HEK293T (cell line): ENCODE measurements at regions of chr3 and their contacts with region 1.

Region 1: GRCh38 chr3:138915503-138916498 is 31.1 kb downstream of the FOXL2 start:
- DNase-seq: peak; percentile 89

Region 2: GRCh38 chr3:138594150-138594934 is 321.5 kb before region 1 on chr3 and contains the start of gene CEP70:
- CTCF ChIA-PET with region 1: interaction called, 40 read pairs
- POLR2A ChIA-PET with region 1: interaction called, 17 read pairs
- DNase-seq: peak; percentile 92

Region 3: DNA sequence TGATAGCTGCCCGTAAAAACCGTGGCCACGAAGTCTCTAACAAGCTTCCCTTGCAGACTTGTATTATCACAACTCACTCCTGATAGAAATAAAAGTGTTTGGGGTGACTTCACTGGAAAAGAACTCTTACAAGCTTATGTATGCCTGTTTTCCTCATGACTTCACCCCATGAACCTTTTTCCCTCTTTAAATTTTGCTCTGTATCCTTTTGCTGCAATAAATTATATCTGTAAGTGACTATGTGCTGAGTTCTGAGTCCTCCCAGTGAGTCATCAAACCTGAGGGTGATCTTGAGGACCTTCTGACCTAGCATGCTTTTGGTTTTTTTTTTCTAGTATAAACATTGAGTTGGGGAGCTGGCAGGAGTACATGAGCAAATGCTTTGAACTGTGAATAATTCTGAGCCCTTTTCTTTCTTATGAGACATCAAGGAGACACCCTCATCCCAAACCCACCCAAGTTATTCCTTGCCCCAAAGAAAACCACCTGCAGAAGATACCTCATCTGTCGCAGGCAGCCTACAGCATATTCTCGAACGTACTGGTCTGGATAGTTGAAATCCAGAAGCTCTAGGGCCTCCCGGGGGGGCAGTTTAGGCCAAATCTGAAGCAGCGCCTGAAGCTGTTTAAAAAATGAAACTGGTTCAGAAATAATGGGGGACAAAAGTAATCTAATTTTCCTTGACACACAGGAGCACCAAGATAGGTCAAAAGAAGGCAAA is 221.4 kb before region 1 on chr3:
- CTCF ChIA-PET with region 1: interaction called, 58 read pairs
- POLR2A ChIA-PET with region 1: interaction called, 13 read pairs
- DNase-seq: no peak

Region 4: DNA sequence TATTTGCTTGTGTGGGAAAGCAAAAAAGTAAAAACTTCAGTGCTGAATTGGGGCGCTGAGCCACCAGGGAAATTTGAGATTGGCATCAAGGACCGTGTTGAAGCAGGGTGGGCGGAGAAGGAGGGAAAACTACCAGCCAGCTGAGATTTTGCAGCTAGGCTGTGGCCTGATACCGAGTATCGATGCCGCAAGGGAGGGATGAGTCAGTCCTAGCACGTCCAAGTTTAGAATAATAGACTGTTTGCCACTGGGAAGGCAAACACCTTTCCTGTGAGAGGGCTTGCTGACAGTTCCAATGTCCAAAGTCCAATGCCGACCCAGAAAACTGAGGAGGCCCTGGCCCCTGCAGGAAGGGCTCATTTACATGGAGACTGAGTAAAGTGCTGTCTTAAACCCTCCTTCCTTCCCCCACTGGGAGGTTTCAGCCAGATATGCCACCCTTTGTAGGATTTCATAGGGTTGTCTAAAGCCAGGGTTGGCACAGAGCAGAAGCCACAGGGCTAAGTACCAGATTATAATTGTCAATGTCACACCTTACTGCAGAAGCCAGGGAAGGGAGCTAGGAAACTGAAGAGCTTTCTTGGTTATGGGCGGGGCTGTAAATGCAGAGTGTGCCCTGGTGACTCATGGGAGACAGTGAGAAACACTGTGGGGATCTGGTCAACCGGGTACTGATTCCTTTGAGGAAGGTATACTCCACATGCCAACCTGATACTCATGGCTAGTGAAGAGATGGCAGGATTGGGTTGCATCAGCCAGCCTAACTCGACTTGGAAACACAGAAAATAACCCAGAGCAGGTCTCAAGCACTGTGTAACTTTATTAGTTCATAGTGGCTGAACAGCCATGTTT is 52.7 kb before region 1 on chr3:
- CTCF ChIA-PET with region 1: interaction called, 12 read pairs
- POLR2A ChIA-PET with region 1: interaction called, 3 read pairs
- DNase-seq: peak; percentile 29

Region 5: DNA sequence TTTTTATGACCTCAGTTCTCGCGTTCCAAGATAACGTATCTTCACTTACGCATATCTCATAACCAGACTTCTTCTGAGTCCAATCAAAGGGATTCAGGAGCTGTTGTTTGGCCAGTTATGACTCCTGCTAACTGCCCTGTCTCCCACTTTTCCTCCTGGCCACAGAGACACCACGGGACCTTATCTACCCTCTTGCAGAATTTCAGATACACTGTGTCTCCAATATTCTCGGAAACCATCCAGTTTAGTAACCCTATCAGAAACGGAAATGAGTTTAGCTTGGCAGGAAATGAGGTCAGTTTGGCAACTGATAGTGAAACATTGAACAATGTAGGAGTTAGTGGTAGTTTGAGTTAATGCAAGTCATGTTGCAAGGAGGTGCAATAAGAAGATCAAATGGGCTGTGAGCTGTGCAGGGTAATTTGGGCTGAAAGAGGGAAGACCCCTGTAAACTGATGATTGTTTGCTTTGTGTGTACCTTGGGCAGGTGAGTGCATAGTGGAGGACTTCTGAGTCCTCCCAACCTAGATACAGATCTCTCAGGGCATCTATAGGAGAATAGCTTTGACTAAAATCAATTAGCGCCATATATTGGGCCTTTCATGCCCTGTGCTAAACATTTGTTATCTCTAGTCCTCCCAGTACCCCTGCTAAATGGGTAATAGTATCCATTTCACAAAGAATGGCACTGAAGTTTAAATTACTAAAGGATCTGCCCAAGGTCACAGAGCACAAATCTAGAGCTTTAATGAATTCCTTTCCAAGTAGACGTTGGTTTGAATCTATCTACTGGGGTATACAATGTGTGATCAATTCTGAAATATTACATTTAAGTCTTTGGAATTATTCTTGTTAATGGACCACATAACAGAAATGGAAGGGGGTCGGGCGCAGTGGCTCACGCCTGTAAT is 39.8 kb before region 1 on chr3:
- CTCF ChIA-PET with region 1: no interaction called
- POLR2A ChIA-PET with region 1: no interaction called
- DNase-seq: no peak

Region 6: DNA sequence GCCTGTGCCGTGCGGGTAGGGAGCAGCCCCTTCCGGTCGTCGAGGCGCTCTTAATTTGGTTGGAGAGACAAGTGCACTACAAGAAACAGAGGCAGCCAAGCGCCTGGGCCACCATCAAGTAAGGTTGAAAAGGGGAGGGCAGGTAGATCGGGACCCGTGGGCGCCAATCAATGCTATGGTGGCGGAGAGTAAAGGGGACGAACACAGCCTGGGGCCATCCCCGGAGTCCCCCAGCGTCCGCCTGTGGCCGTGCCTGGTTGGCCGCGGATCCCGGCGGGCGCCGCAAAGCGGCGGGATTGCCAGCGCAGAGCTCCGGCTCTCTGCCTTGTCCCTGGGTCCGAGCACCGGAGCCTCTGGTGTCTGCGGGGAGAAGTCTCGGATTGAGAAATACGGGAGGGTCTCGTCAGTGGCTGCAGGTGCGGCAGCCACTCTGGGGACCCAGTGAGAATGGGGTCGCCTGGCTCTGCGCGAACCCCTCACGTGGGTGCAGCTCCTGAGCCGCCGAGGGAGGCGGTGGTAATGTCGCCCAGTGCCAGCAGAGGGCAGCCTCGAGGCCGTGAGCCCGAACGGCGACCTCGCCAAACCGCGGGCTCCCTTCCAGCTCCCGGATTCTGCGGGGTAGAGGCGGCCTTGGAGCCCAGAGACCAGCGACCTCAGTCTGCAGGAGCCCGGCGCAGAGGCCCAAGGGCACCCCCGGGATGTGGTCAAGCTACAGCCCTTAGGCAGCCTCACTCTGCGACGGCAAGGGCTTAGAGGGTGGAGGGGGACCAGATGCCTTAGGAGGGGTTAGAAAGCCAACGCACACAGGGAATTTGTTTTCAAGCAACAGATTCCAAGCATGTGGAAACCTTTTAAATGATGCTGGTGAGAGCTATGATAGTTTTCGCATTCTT is 20.3 kb after region 1 on chr3:
- CTCF ChIA-PET with region 1: interaction called, 12 read pairs
- POLR2A ChIA-PET with region 1: interaction called, 7 read pairs
- DNase-seq: peak; percentile 87

Region 7: DNA sequence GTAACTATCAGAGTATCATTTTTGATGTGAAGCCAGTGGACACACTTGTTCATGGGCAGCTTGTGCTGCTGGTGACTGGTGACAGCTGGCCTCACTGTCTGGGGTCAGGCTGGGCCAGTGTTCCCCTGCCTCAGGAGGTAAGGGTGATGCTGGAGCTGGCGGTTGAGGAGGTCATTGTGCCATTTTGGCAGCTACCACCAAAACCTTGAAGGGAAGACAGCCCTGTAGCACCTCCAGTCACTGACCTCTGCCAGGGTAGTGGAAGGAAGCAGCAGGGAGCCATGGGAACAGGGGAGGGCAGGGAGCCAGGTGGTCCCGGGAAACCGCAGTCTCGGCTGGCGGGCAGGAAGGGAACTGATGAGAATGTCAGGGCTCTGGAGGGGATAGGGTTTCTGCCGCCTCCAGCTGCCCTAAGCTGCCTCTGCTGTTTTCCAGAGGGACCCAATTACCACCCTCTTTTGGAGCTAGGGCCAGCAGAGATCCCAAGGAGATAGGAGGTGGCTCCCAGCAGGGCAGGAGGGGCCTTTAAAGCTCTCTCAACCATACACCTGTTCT is 56.0 kb after region 1 on chr3:
- CTCF ChIA-PET with region 1: no interaction called
- POLR2A ChIA-PET with region 1: no interaction called
- DNase-seq: no peak